ENCODE measurements at regions of chr3 and their contacts with region 1.

Region 1: DNA sequence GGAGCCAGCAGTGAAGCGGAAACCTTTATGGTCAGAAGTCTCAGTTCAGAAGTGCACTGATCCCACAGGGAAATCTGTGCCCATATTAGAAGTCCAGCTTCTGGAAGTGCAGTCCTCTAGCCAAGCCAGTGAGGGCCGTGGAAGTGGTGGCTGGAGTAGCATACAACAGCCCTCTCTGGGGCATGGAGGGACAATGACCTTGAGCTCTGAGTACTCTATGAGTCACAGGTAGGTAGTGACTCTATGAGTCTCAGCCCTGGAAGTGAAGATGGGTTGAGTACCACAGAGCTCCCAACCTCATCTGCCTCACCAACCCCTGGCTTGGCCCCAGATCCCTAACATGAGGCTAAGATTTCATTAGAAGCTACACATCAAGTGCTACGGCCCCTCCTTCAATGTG is 205.9 kb upstream of the PPP2R3A start:
- DNase-seq: no peak
- ATAC-seq: no peak; the same call in 1 of the 2 replicates
- H3K4me3 ChIP-seq: no peak overlapping the region
- H3K27ac ChIP-seq: no peak overlapping the region
- H3K4me1 ChIP-seq: no peaks in the 10 kb centered on the region
- H3K27me3 ChIP-seq: peaks cover 3% of the 10 kb centered on the region
- CTCF ChIP-seq: no peak

Region 2: GRCh38 chr3:134846911-134847317 is 912.7 kb before region 1 on chr3:
- CTCF ChIA-PET with region 1: no interaction called
- POLR2A ChIA-PET with region 1: no interaction called
- in situ Hi-C with region 1: no loop called
- intact Hi-C with region 1: no loop called
- DNase-seq: peak; percentile 64
- ATAC-seq: peak; percentile 59; the same call in 1 of the 2 replicates
- H3K4me3 ChIP-seq: no peak overlapping the region
- H3K27ac ChIP-seq: no peak overlapping the region
- H3K4me1 ChIP-seq: no peaks in the 10 kb centered on the region
- H3K27me3 ChIP-seq: no peaks in the 10 kb centered on the region; the same call in 1 of the 2 replicates
- CTCF ChIP-seq: no peak

Region 3: DNA sequence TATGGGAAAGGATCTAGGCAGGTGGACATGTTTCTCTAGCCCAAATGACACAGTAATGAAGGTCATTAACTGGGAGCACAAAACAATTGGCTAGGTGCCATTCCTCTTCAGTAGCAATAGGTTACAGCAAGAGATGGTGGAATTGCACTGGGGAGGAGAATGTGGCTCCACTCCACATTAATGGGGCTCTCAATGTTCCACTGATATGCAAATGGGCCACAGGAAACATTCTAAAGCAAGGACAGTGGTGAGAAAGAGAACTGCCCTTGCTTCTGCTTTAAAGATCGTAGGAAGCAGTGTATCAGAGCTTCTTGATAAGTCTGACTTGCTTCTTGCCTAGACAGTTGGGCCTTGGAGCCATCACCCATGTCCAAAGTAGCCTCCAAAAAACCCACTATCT is 65.5 kb before region 1 on chr3:
- CTCF ChIA-PET with region 1: no interaction called
- POLR2A ChIA-PET with region 1: no interaction called
- in situ Hi-C with region 1: no loop called
- intact Hi-C with region 1: no loop called
- DNase-seq: no peak
- ATAC-seq: no peak
- H3K4me3 ChIP-seq: no peak overlapping the region
- H3K27ac ChIP-seq: no peak overlapping the region
- H3K4me1 ChIP-seq: no peaks in the 10 kb centered on the region
- H3K27me3 ChIP-seq: no peaks in the 10 kb centered on the region
- CTCF ChIP-seq: no peak

Region 4: DNA sequence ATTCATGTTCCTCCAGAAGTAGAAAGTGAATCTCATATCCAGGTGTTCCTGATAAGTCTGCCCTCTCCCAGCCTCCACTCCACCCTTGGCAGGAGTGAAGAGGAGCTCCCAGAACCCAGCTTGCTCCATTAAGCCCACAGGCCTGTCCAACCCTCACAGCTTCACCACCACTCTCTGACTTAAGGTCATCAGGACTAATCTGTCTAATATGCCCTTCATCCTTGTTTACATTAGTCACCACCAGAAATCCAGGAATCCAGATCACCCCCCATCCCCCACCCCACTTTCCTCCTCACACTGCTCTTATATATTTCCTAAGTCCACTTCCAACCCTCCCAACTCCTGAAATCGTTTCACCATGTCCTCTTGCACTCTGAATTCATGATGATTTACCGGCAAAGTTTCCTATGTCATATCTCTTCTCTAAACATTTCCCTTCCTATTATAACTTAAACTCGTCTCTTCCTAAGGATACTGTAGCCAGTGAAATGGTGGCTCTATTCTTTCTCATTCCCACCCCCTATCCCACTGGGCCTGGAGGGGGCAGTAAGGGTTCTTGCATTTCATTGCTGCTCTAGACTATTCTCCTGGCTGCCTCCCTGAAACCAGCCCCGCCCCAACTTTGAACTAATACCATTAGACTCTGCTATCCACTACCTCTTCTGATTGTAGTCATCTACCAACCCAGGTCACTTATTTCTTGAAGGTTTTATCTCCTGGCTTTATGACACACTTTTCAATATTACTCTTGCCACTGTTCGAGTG is 249.2 kb after region 1 on chr3:
- CTCF ChIA-PET with region 1: interaction called, 11 read pairs
- POLR2A ChIA-PET with region 1: no interaction called
- in situ Hi-C with region 1: no loop called
- intact Hi-C with region 1: no loop called
- DNase-seq: no peak
- ATAC-seq: no peak
- H3K4me3 ChIP-seq: no peak overlapping the region
- H3K27ac ChIP-seq: no peak overlapping the region
- H3K4me1 ChIP-seq: no peaks in the 10 kb centered on the region
- H3K27me3 ChIP-seq: no peaks in the 10 kb centered on the region
- CTCF ChIP-seq: no peak